ENCODE measurements at regions of chr15 and their contacts with region 1.

Region 1: GRCh38 chr15:45648521-45649200 is 13.8 kb downstream of the SQOR start:
- DNase-seq: peak; percentile 61
- H3K4me3 Mint-ChIP-seq: peak overlapping the region; percentile 46
- H3K27ac Mint-ChIP-seq: peak overlapping the region; percentile 82
- H3K4me1 Mint-ChIP-seq: peaks cover 19% of the 10 kb centered on the region
- H3K27me3 Mint-ChIP-seq: no peaks in the 10 kb centered on the region
- CTCF ChIP-seq: no peak

Region 2: GRCh38 chr15:45634442-45635190 is 14.0 kb before region 1 on chr15 and contains the start of gene SQOR:
- CTCF ChIA-PET with region 1: interaction called, 11 read pairs
- POLR2A ChIA-PET with region 1: interaction called, 56 read pairs
- intact Hi-C with region 1: no loop called
- DNase-seq: peak; percentile 90
- H3K4me3 Mint-ChIP-seq: peak within 1 kb of the TSS; percentile 99
- H3K27ac Mint-ChIP-seq: peak within 1 kb of the TSS; percentile 92
- H3K4me1 Mint-ChIP-seq: peaks cover 34% of the 10 kb centered on the region
- H3K27me3 Mint-ChIP-seq: no peaks in the 10 kb centered on the region
- CTCF ChIP-seq: no peak
- total RNA-seq, gene SQOR: 49.8 and 75.0 TPM in 2 replicates

Region 3: DNA sequence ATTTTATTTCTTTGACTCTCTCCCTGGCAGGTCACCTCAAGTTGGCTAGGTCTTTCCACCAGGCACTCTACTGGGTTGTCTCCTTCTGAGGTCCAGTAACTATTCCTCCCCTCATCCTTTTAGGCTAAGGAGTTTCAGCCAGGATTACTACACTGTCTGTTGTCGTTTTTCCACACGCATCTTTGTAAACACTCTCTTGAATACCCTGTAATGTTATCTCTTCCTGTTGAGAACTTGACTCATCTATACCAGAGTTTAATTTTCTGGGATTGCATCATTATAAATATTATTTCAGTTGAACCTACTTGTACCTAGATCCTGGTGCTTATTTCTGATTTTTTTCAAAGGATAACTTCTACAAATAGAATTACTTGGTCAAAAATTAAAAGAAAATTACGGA is 124.5 kb after region 1 on chr15:
- CTCF ChIA-PET with region 1: no interaction called
- POLR2A ChIA-PET with region 1: no interaction called
- intact Hi-C with region 1: no loop called
- DNase-seq: peak; percentile 24
- H3K4me3 Mint-ChIP-seq: no peak overlapping the region
- H3K27ac Mint-ChIP-seq: peak overlapping the region; percentile 46
- H3K4me1 Mint-ChIP-seq: peaks cover 13% of the 10 kb centered on the region
- H3K27me3 Mint-ChIP-seq: no peaks in the 10 kb centered on the region
- CTCF ChIP-seq: no peak